ENCODE measurements at regions of chr11 and their contacts with region 1.

Region 1: GRCh38 chr11:36564376-36565030 is 3.3 kb upstream of the RAG1 start:
- DNase-seq: peak; percentile 70
- ATAC-seq: peak; percentile 56
- H3K4me3 Mint-ChIP-seq: peak overlapping the region; percentile 43
- H3K27ac Mint-ChIP-seq: no peak overlapping the region
- H3K4me1 Mint-ChIP-seq: peaks cover 5% of the 10 kb centered on the region
- H3K27me3 Mint-ChIP-seq: peaks cover 27% of the 10 kb centered on the region
- CTCF ChIP-seq: peak; percentile 72

Region 2: DNA sequence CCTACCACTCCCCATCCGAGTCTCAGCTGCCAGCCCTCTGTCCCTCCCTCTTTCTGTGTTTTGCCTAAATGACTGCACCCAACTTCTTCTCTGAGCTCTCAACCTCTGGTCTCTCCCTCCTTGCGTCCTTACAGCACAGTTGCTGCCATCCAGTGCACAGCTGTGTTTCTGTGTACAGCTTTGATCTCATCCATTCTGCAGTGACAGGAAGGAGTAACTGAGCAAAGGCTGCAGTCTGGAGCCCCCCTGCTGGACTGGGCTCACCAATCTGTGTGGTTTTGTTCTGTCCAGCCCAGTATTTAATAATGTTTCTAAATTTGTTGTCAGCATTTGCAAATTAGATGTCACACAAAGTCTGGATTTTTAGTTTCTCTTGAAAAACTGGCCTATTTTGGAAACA is 224.6 kb before region 1 on chr11:
- CTCF ChIA-PET with region 1: no interaction called
- POLR2A ChIA-PET with region 1: no interaction called
- intact Hi-C with region 1: no loop called
- DNase-seq: no peak
- ATAC-seq: no peak
- H3K4me3 Mint-ChIP-seq: no peak overlapping the region
- H3K27ac Mint-ChIP-seq: no peak overlapping the region
- H3K4me1 Mint-ChIP-seq: peaks cover 10% of the 10 kb centered on the region
- H3K27me3 Mint-ChIP-seq: peaks cover 34% of the 10 kb centered on the region
- CTCF ChIP-seq: no peak

Region 3: GRCh38 chr11:36398231-36398953 is 166.1 kb before region 1 on chr11:
- CTCF ChIA-PET with region 1: no interaction called
- POLR2A ChIA-PET with region 1: no interaction called
- intact Hi-C with region 1: no loop called
- DNase-seq: no peak
- ATAC-seq: no peak
- H3K4me3 Mint-ChIP-seq: no peak overlapping the region
- H3K27ac Mint-ChIP-seq: no peak overlapping the region
- H3K4me1 Mint-ChIP-seq: peaks cover 29% of the 10 kb centered on the region
- H3K27me3 Mint-ChIP-seq: peaks cover 12% of the 10 kb centered on the region
- CTCF ChIP-seq: no peak

Region 4: GRCh38 chr11:36541001-36541400 is 23.5 kb before region 1 on chr11:
- CTCF ChIA-PET with region 1: interaction called, 10 read pairs
- POLR2A ChIA-PET with region 1: no interaction called
- intact Hi-C with region 1: no loop called
- DNase-seq: peak; percentile 58
- ATAC-seq: peak; percentile 79
- H3K4me3 Mint-ChIP-seq: no peak overlapping the region
- H3K27ac Mint-ChIP-seq: no peak overlapping the region
- H3K4me1 Mint-ChIP-seq: no peaks in the 10 kb centered on the region
- H3K27me3 Mint-ChIP-seq: peaks cover 4% of the 10 kb centered on the region
- CTCF ChIP-seq: peak; percentile 22

Region 5: DNA sequence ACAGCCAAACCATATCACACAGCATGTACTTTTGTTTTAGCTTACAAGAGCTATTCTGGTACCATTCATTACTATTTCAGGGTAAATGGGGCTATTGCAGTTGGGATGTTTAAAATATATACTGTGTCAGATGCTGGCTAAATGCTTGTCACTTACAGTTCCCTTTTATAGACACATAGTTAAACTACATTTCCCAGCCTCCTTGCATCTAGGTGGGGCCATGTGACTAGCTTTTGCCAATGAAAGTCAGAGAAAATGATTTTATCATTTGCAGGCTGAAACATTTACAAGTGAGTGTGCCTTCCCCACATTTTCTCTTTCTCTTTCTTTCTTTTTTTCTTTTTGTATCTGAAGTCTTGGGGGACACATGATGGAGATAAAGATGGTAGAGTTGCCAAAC is 22.0 kb after region 1 on chr11:
- CTCF ChIA-PET with region 1: interaction called, 13 read pairs
- POLR2A ChIA-PET with region 1: no interaction called
- intact Hi-C with region 1: no loop called
- DNase-seq: no peak
- ATAC-seq: peak; percentile 37
- H3K4me3 Mint-ChIP-seq: no peak overlapping the region
- H3K27ac Mint-ChIP-seq: no peak overlapping the region
- H3K4me1 Mint-ChIP-seq: no peaks in the 10 kb centered on the region
- H3K27me3 Mint-ChIP-seq: peaks cover 16% of the 10 kb centered on the region
- CTCF ChIP-seq: no peak

Region 6: GRCh38 chr11:36672813-36673450 is 108.4 kb after region 1 on chr11:
- CTCF ChIA-PET with region 1: interaction called, 98 read pairs
- POLR2A ChIA-PET with region 1: no interaction called
- intact Hi-C with region 1: loop called (anchors 5 kb)
- DNase-seq: peak; percentile 4
- ATAC-seq: no peak
- H3K4me3 Mint-ChIP-seq: no peak overlapping the region
- H3K27ac Mint-ChIP-seq: no peak overlapping the region
- H3K4me1 Mint-ChIP-seq: no peaks in the 10 kb centered on the region
- H3K27me3 Mint-ChIP-seq: peaks cover 17% of the 10 kb centered on the region
- CTCF ChIP-seq: peak; percentile 93

Region 7: DNA sequence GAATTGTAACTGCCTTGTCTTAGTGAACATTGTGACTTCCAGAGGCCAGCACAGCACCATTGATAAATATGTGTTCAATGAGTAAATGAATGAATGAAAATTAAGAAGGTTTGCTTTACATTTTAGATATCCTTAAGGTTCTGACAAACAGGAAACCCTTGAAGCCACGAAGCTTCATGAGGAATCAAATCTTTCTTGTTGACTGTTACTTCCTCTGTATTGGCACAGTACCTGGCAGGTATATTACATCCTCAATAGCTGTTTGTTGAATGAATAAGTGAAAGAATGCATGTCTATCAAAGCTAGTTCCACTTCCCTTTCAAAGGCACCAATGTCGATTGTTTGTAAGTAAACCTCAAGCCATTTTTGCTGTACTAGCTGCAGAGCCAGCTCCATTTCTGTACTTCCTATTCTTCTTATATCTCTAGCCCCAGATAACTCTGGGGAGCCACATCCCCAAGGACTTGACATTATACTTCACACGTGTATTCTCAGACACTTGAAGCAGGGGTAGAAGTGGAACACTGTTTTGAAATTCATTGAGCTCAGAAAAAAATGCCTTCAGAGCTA is 173.9 kb after region 1 on chr11:
- CTCF ChIA-PET with region 1: interaction called, 37 read pairs
- POLR2A ChIA-PET with region 1: no interaction called
- intact Hi-C with region 1: no loop called
- DNase-seq: no peak
- ATAC-seq: no peak
- H3K4me3 Mint-ChIP-seq: no peak overlapping the region
- H3K27ac Mint-ChIP-seq: no peak overlapping the region
- H3K4me1 Mint-ChIP-seq: no peaks in the 10 kb centered on the region
- H3K27me3 Mint-ChIP-seq: peaks cover 17% of the 10 kb centered on the region
- CTCF ChIP-seq: no peak